BJ (cell line): ENCODE measurements at regions of chr6 and their contacts with region 1.

Region 1: DNA sequence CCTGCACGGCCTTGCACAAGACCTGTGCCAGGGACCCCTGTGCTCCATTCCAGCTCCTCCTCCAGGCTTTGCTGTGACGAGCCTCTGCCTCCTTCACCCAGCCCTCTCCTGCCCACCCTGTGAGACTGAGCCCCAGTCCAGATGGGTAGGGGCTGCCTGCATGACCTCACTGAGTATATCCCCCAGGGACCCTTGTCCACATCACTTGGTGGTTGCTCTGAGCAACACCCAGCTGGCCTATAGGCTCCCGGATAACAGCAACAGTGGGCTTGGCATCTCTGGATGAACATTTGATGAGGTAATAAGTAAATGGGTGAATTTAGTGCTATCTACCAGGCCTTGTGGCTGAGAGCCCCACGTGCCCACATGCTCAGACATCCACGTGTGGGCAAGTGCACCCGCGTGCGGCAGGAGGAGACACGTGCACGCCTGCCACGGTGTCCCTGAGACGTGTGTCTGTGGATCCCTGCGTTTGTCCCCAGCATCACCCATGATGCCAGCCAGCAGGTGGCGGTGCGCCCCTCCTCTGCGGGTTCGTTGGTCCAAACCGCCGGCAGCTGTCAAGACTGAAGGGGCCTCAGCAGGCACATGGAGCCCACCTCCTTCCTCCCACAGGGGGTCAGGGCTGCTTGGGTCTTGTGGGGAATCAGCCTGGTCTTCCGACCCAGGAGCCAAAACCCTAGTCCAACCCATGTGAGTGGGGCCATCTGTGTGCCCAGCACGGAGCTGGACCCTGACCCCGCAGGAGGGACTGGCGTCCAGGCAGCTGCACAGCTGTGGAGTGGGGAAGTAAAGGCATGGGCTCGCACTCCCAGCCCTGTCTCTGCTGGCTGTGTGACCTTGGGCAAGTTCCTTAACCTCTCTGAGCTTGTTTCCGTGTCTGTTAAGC is 45.9 kb downstream of the FGD2 start:
- DNase-seq: no peak
- H3K4me3 ChIP-seq: no peak overlapping the region
- H3K27me3 ChIP-seq: peaks cover 2% of the 10 kb centered on the region
- CTCF ChIP-seq: peak; percentile 89

Region 2: DNA sequence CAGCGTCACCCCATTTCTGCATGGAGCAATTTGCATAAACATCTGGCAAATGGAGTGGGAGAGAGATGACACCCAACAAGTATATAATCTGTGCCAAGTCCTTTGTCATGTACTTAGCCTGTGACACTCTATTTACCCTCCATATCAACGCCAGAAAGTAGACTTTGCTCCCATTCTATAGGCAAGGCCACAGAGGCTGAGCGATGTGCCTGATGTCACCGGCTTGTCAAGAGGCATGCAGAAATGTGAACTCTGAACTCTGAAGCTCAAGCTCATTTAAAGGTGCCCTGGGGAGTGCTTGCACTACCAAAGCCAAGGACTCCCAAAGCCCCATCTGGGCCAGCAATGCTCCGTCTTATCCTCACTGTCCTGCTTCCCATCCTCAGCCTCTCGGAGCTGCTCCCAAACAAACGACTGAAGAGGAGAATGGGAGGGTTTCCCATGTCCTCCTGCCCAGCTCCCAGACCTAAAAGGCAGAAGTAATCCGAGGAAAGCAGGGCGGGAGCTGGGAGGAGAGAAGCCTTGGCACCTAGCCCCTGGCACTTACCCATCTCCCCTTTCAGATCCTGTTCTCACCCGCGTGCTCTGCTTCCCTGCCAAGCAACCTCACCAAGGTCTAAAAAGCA is 221.3 kb before region 1 on chr6:
- CTCF ChIA-PET with region 1: no interaction called
- POLR2A ChIA-PET with region 1: no interaction called
- DNase-seq: no peak
- H3K4me3 ChIP-seq: no peak overlapping the region
- H3K27me3 ChIP-seq: no peaks in the 10 kb centered on the region; the same call in 1 of the 2 replicates
- CTCF ChIP-seq: no peak

Region 3: DNA sequence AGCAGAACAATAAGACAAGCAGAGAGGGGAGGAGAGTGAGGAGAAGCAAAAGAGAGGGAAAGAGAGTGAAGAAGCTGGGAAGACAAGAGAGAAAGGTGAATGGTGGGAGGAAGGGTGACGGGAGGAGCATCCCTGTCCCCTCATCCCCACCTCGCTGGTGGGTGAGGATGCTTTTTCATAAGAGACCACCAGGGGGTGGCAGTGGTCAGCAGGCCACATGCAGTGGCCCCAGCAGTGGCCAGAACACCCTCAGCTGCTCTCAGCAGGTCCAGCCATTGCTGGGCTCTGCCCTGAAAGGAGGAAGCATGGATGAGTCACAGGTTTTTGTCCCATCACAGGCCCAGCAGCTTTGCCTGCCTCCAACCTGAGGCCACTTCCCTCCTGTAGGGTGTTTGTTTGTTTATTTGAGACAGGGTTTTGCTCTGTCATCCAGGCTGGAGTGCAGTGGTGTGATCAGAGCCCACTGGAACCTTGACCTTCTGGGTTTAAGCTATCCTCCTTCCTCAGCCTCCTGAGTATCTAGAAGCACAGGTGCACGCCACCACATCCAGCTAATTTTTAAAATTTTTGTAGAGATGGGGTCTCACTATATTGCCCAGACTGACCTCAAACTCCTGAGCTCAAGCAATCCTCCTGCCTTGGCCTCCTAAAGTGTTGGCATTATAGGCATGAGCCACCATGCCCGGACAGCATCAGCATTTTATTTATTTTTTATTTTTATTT is 22.0 kb before region 1 on chr6:
- CTCF ChIA-PET with region 1: interaction called, 28 read pairs
- POLR2A ChIA-PET with region 1: no interaction called
- DNase-seq: peak; percentile 41
- H3K4me3 ChIP-seq: no peak overlapping the region
- H3K27me3 ChIP-seq: no peaks in the 10 kb centered on the region; the same call in none of the 2 replicates
- CTCF ChIP-seq: peak; percentile 81

Region 4: GRCh38 chr6:37072526-37072925 is 21.1 kb after region 1 on chr6:
- CTCF ChIA-PET with region 1: interaction called, 30 read pairs
- POLR2A ChIA-PET with region 1: no interaction called
- DNase-seq: no peak
- H3K4me3 ChIP-seq: no peak overlapping the region
- H3K27me3 ChIP-seq: peaks cover 1% of the 10 kb centered on the region; the same call in 1 of the 2 replicates
- CTCF ChIP-seq: no peak

Region 5: GRCh38 chr6:37137201-37138090 is 86.1 kb after region 1 on chr6:
- CTCF ChIA-PET with region 1: interaction called, 20 read pairs
- POLR2A ChIA-PET with region 1: no interaction called
- DNase-seq: peak; percentile 98
- H3K4me3 ChIP-seq: peak overlapping the region; percentile 2; the same call in 1 of the 2 replicates
- H3K27me3 ChIP-seq: no peaks in the 10 kb centered on the region
- CTCF ChIP-seq: no peak

Region 6: GRCh38 chr6:37177077-37177934 is 125.9 kb after region 1 on chr6:
- CTCF ChIA-PET with region 1: interaction called, 243 read pairs
- POLR2A ChIA-PET with region 1: no interaction called
- DNase-seq: no peak
- H3K4me3 ChIP-seq: no peak overlapping the region
- H3K27me3 ChIP-seq: no peaks in the 10 kb centered on the region
- CTCF ChIP-seq: peak; percentile 11; the same call in 1 of the 2 replicates

Region 7: DNA sequence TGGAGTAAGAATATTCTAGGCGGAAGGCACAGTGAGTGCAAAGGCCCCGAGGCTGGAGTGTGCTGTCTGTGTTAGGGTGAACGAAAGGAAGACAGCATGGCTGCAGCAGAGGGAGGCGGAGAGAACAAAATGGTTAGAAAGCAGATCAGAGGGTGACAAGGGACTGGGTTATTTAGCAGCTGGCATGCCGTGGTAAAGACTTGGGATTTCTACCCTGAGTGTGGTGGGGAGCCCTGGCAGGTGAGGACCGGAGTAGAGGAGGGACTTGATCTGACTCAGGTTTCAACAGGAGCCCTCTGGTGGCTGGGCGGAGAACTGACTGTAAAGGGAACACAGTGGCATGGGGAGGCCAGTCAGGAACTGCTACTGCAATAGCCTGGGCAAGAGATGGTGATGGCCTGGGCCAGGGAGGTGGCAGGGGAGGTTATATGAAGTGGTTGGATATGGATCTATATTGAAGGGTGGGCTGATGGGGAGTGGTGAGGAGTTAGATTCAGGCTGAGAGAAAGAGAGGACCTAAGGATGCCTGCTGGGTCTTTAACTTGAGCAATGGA is 156.6 kb after region 1 on chr6:
- CTCF ChIA-PET with region 1: interaction called, 124 read pairs
- POLR2A ChIA-PET with region 1: no interaction called
- DNase-seq: no peak
- H3K4me3 ChIP-seq: no peak overlapping the region
- H3K27me3 ChIP-seq: no peaks in the 10 kb centered on the region; the same call in 1 of the 2 replicates
- CTCF ChIP-seq: peak; percentile 89